K562 (cell line): ENCODE measurements at regions of chrX and their contacts with region 1.

Region 1: GRCh38 chrX:48574270-48575266 is at the start of gene RBM3:
- DNase-seq: peak; percentile 90 to 97 (median 92)
- ATAC-seq: peak; percentile 96
- H3K4me3 ChIP-seq: peak within 1 kb of the TSS; percentile 90
- H3K27ac ChIP-seq: peak within 1 kb of the TSS; percentile 100
- H3K4me1 ChIP-seq: peaks cover 13 to 14% of the 10 kb centered on the region in 2 experiments; a peak in 4 of 5 replicates
- H3K27me3 ChIP-seq: no peaks in the 10 kb centered on the region
- CTCF ChIP-seq: peak; percentile 35 to 51 (median 37); a peak in 4 of 6 replicates
- EP300 ChIP-seq: 0 out of 2 replicates have a peak, but pooled peaks have one; percentile 12
- POLR2A ChIP-seq: peak; percentile 98
- RAD21 ChIP-seq: no peak
- polyA plus RNA-seq, gene RBM3: 70.3 to 97.1 TPM

Region 2: DNA sequence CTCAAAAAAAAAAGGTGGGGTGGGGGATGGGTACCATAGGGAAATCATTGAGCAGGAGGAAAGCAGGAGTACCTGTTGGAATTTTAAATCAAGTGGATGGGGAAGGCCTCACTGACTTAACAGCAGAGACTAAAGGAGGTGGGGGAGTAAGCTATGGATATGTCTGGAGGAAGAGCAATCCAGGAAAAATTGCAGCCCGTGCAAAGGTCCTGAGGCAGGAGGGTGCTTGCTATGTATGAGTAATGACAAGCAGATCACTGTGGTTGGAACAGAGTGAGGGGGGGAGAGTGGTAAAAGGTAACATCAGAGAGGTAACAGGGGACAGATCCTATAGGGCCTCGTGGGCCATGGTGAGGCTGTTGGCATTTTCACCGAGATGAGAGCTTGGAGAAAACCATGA is 94.4 kb before region 1 on chrX:
- CTCF ChIA-PET with region 1: no interaction called
- POLR2A ChIA-PET with region 1: no interaction called
- in situ Hi-C with region 1: no loop called
- intact Hi-C with region 1: no loop called
- DNase-seq: no peak
- ATAC-seq: no peak
- H3K4me3 ChIP-seq: no peak overlapping the region
- H3K27ac ChIP-seq: no peak overlapping the region
- H3K4me1 ChIP-seq: peaks cover 3 to 6% of the 10 kb centered on the region in 2 experiments; a peak in 4 of 5 replicates
- H3K27me3 ChIP-seq: no peaks in the 10 kb centered on the region
- CTCF ChIP-seq: no peak
- EP300 ChIP-seq: no peak
- POLR2A ChIP-seq: no peak
- RAD21 ChIP-seq: no peak

Region 3: GRCh38 chrX:48521353-48522243 is 53.0 kb before region 1 on chrX and contains the start of gene EBP:
- CTCF ChIA-PET with region 1: no interaction called
- POLR2A ChIA-PET with region 1: no interaction called
- in situ Hi-C with region 1: no loop called
- intact Hi-C with region 1: loop called (anchors 10 kb)
- DNase-seq: peak; percentile 93 to 98 (median 96)
- ATAC-seq: peak; percentile 98
- H3K4me3 ChIP-seq: peak within 1 kb of the TSS; percentile 60
- H3K27ac ChIP-seq: peak within 1 kb of the TSS; percentile 88
- H3K4me1 ChIP-seq: peaks cover 9 to 12% of the 10 kb centered on the region in 2 experiments; a peak in 3 of 5 replicates
- H3K27me3 ChIP-seq: no peaks in the 10 kb centered on the region
- CTCF ChIP-seq: no peak
- EP300 ChIP-seq: no peak
- POLR2A ChIP-seq: peak; percentile 77
- RAD21 ChIP-seq: no peak
- polyA plus RNA-seq, gene EBP: 569 to 987 TPM

Region 4: GRCh38 chrX:48539345-48540027 is 35.1 kb before region 1 on chrX and contains the start of gene TBC1D25:
- CTCF ChIA-PET with region 1: no interaction called
- POLR2A ChIA-PET with region 1: interaction called, 12 read pairs
- in situ Hi-C with region 1: no loop called
- intact Hi-C with region 1: no loop called
- DNase-seq: peak; percentile 90 to 99 (median 92)
- ATAC-seq: peak; percentile 91
- H3K4me3 ChIP-seq: peak within 1 kb of the TSS; percentile 66
- H3K27ac ChIP-seq: peak within 1 kb of the TSS; percentile 94
- H3K4me1 ChIP-seq: peaks cover 9 to 19% of the 10 kb centered on the region in 2 experiments; a peak in 4 of 5 replicates
- H3K27me3 ChIP-seq: no peaks in the 10 kb centered on the region
- CTCF ChIP-seq: peak; percentile 53 to 62 (median 55)
- EP300 ChIP-seq: 0 out of 2 replicates have a peak, but pooled peaks have one; percentile 27
- POLR2A ChIP-seq: peak; percentile 71
- RAD21 ChIP-seq: peak; percentile 46 to 48; a peak in 3 of 4 replicates
- polyA plus RNA-seq, gene TBC1D25: 0.62 to 0.87 TPM

Region 5: GRCh38 chrX:48597353-48598264 is 23.0 kb after region 1 on chrX and contains the start of gene WDR13:
- CTCF ChIA-PET with region 1: no interaction called
- POLR2A ChIA-PET with region 1: interaction called, 10 read pairs
- in situ Hi-C with region 1: no loop called
- intact Hi-C with region 1: loop called (anchors 2 kb)
- DNase-seq: peak; percentile 90 to 96 (median 93)
- ATAC-seq: peak; percentile 91
- H3K4me3 ChIP-seq: peak within 1 kb of the TSS; percentile 94
- H3K27ac ChIP-seq: peak within 1 kb of the TSS; percentile 97
- H3K4me1 ChIP-seq: peaks cover 7 to 36% of the 10 kb centered on the region in 2 experiments; a peak in 4 of 5 replicates
- H3K27me3 ChIP-seq: no peaks in the 10 kb centered on the region
- CTCF ChIP-seq: no peak
- EP300 ChIP-seq: peak; percentile 42
- POLR2A ChIP-seq: peak; percentile 86
- RAD21 ChIP-seq: no peak
- polyA plus RNA-seq, gene WDR13: 7.4 to 16.0 TPM